ENCODE measurements at regions of chr7 and their contacts with region 1.

Region 1: DNA sequence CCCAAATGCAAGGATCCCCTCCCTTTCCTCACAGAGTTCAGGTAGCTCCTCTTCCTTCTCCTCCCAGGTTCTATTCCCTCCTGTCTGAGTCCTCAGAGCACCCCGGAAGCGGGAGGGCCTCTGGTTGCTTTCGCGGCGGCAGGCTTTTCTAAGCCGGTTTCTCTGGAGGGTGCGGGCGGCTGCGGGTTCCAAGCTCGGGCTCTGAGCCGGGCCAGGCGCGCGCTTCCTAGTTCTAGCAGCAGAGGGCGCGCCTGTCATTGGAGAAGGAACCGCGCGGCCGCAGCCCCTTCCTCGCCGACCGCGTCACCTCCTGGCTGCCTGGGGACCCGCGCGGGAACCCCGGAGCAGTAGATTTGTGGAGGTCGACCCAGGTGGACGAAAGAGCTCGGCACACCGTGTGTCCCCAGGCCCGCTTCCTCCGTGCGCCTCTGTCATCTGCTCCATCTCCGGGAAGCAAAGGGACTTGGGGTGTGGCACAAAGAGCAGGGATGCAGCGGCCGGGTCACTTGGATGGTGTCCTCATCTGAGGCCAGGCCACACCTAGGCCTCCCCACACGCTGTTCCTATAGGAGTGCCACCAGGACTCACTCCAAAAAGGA is 389.0 kb upstream of the PODXL start:
- DNase-seq: peak; percentile 65 to 87
- ATAC-seq: peak; percentile 76
- H3K4me3 ChIP-seq: no peak overlapping the region
- H3K27ac ChIP-seq: no peak overlapping the region
- H3K4me1 ChIP-seq: peaks cover 2% of the 10 kb centered on the region in 2 donors
- H3K27me3 ChIP-seq: no peaks in the 10 kb centered on the region

Region 2: DNA sequence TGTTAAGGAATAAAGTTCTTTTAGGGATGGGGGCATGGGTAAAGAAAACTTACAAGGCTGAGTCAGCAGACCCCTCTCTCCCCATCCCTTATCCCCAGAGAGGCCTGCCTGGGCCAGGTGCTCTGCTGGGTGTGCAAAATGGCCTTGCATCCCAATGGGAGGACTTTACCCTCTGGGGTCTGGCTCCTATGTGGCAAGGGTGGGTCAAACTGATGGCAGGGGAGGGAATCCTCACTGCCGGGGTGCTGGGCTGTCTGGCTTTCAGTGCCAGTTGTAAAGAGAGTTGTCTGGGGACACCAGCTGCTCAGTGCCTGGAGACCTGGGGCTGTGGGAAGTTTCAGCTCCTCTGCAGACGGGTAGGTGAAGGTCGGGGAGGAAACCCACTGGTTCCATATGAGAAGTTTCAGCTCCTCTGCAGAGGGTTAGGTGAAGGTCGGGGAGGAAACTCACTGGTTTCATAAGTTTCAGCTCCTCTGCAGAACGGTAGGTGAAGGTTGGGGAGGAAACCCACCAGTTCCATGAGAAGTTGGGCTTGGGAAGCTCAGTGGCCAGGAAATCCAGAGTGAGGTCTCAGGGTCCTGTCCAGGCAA is 261.8 kb before region 1 on chr7:
- intact Hi-C with region 1: no loop called
- DNase-seq: no peak
- ATAC-seq: no peak
- H3K4me3 ChIP-seq: no peak overlapping the region
- H3K27ac ChIP-seq: no peak overlapping the region
- H3K4me1 ChIP-seq: no peaks in the 10 kb centered on the region
- H3K27me3 ChIP-seq: no peaks in the 10 kb centered on the region

Region 3: DNA sequence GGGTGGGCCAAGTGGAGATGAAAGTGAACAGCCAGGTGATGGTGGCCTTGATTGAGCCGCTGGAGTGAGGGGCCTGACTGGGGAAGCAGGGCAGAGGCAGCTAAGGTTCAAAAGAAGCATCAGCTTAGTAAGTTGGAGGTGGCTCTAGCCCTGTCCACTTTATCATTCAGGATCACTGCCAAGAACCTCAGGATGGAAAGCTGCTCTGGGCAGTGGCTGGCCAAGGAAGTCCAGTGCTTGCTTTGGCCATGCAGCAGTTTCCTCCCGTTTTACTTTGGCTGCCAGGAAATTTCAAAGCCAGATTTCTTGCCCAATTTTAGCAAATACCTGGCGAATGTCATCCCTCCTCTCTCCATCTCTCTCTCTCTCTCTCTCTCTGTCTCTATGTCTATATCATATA is 246.0 kb after region 1 on chr7:
- intact Hi-C with region 1: loop called in 1 of 2 experiments (anchors 1 kb)
- DNase-seq: peak; percentile 50 to 63
- ATAC-seq: peak; percentile 45
- H3K4me3 ChIP-seq: no peak overlapping the region
- H3K27ac ChIP-seq: no peak overlapping the region
- H3K4me1 ChIP-seq: no peaks in the 10 kb centered on the region
- H3K27me3 ChIP-seq: no peaks in the 10 kb centered on the region

Region 4: GRCh38 chr7:132311733-132312132 is 366.3 kb after region 1 on chr7:
- intact Hi-C with region 1: loop called (anchors 5 kb)
- DNase-seq: no peak
- ATAC-seq: no peak
- H3K4me3 ChIP-seq: no peak overlapping the region
- H3K27ac ChIP-seq: no peak overlapping the region
- H3K4me1 ChIP-seq: no peaks in the 10 kb centered on the region
- H3K27me3 ChIP-seq: no peaks in the 10 kb centered on the region

Region 5: DNA sequence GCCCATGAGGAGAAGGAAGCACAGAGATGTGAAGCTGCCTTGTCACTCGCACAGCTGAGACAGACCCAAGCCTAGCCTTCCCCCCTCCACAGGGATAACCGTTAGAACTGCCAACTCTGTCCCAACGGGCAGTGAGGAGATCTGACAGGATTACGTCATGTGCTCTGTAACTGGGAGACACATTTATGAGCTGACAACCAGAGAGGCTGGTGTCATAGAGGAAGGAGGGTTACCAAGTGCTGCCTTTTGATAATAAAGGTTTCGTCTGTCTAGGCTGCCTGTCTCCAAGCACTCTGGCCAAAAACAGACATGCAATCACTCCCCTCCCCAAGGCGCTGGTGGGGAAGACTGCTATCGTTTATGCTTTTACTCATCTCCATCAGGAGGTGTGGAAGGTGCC is 465.0 kb after region 1 on chr7:
- intact Hi-C with region 1: loop called in 1 of 2 experiments (anchors 10 kb)
- DNase-seq: no peak
- ATAC-seq: peak; percentile 54
- H3K4me3 ChIP-seq: no peak overlapping the region
- H3K27ac ChIP-seq: no peak overlapping the region
- H3K4me1 ChIP-seq: no peaks in the 10 kb centered on the region
- H3K27me3 ChIP-seq: no peaks in the 10 kb centered on the region

Region 6: GRCh38 chr7:132580717-132581285 is 635.4 kb after region 1 on chr7:
- intact Hi-C with region 1: loop called (anchors 5 kb)
- DNase-seq: peak; percentile 75 to 85
- ATAC-seq: peak; percentile 69
- H3K4me3 ChIP-seq: no peak overlapping the region
- H3K27ac ChIP-seq: no peak overlapping the region
- H3K4me1 ChIP-seq: no peaks in the 10 kb centered on the region
- H3K27me3 ChIP-seq: no peaks in the 10 kb centered on the region

Measured in aorta (tissue), 5 donors.